Mammary epithelial cell (primary cell): ENCODE measurements at regions of chr22 and their contacts with region 1.

Region 1: GRCh38 chr22:35627264-35628041 is 10.3 kb upstream of the MB start:
- DNase-seq: peak; percentile 82
- H3K4me3 ChIP-seq: peak overlapping the region; percentile 30 to 52 (median 51)
- H3K27ac ChIP-seq: peak overlapping the region; percentile 75
- H3K4me1 ChIP-seq: peaks cover 26% of the 10 kb centered on the region
- H3K27me3 ChIP-seq: no peaks in the 10 kb centered on the region
- CTCF ChIP-seq: peak; percentile 35 to 80

Region 2: DNA sequence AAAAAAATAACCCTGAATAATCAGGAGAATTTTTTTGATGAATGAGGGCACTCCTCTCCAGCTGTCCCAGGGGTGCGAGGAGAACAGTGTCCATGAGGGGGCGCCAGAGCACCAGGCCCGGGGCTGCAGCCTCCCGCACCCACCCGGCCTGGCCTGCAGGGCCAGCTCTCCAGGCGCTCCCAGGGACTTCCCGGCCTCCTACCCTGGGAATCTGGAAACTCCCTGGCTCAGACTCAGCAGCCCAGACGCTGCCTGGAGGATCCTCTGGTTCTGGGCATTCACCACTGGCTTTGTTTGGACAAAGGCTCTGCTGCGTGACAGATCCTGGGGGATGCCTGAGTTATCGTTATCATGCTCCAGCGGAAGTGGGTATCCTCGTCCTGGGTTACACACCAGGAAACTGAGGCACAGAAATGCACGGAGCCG is 196.5 kb before region 1 on chr22:
- CTCF ChIA-PET with region 1: no interaction called
- dilution Hi-C with region 1: no loop called
- in situ Hi-C with region 1: no loop called
- intact Hi-C with region 1: loop called (anchors 1 kb)
- DNase-seq: peak; percentile 87
- H3K4me3 ChIP-seq: no peak overlapping the region
- H3K27ac ChIP-seq: peak overlapping the region; percentile 44
- H3K4me1 ChIP-seq: peaks cover 16% of the 10 kb centered on the region
- H3K27me3 ChIP-seq: no peaks in the 10 kb centered on the region
- CTCF ChIP-seq: peak; percentile 82 to 98

Region 3: GRCh38 chr22:35582861-35583670 is 44.4 kb before region 1 on chr22:
- CTCF ChIA-PET with region 1: no interaction called
- dilution Hi-C with region 1: no loop called
- in situ Hi-C with region 1: no loop called
- intact Hi-C with region 1: loop called (anchors 1 kb)
- DNase-seq: no peak
- H3K4me3 ChIP-seq: no peak overlapping the region
- H3K27ac ChIP-seq: no peak overlapping the region
- H3K4me1 ChIP-seq: peaks cover under 1% of the 10 kb centered on the region
- H3K27me3 ChIP-seq: no peaks in the 10 kb centered on the region
- CTCF ChIP-seq: peak; percentile 85 to 93

Region 4: DNA sequence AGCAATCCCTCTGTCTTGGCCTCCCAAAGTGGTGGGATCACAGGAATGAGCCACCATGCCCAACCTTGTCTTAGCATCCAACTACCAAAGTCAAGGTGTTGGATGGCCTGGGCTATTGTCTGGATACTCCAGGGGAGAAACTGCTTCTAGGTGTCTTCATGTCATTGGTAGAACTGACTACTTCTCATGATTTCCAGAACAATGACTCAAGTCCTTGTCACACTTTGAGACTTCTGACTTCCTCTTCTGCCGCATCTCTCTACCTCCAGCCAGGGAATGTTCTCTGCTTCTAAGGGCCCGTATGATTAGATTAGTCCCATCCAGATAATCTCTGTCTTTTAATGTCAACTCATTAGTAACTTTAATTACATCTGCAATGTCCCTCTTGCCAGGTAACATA is 51.4 kb after region 1 on chr22:
- CTCF ChIA-PET with region 1: no interaction called
- dilution Hi-C with region 1: no loop called
- in situ Hi-C with region 1: no loop called
- intact Hi-C with region 1: no loop called
- DNase-seq: peak; percentile 17
- H3K4me3 ChIP-seq: no peak overlapping the region
- H3K27ac ChIP-seq: no peak overlapping the region
- H3K4me1 ChIP-seq: peaks cover 6% of the 10 kb centered on the region
- H3K27me3 ChIP-seq: no peaks in the 10 kb centered on the region
- CTCF ChIP-seq: no peak

Region 5: DNA sequence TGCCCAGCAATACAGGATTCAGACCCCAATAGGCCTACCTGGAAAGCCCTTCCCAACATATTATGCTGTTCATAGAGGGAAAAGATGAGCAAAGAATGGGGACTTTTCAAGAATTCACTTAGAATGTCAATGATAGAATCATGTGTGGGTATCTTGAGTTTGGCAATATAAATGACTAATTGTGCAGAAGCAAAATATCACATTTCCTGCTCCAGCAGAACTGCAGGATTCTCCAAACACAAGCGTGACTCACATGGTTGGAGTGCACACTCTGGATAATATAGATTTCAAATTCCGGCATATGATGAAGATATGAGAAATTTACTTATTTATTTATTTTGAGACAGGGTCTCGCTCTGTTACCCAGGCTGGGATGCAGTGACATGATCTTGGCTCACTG is 77.7 kb after region 1 on chr22:
- CTCF ChIA-PET with region 1: interaction called, 16 read pairs
- dilution Hi-C with region 1: no loop called
- in situ Hi-C with region 1: no loop called
- intact Hi-C with region 1: no loop called
- DNase-seq: peak; percentile 48
- H3K4me3 ChIP-seq: no peak overlapping the region
- H3K27ac ChIP-seq: no peak overlapping the region
- H3K4me1 ChIP-seq: no peaks in the 10 kb centered on the region
- H3K27me3 ChIP-seq: no peaks in the 10 kb centered on the region
- CTCF ChIP-seq: no peak

Region 6: DNA sequence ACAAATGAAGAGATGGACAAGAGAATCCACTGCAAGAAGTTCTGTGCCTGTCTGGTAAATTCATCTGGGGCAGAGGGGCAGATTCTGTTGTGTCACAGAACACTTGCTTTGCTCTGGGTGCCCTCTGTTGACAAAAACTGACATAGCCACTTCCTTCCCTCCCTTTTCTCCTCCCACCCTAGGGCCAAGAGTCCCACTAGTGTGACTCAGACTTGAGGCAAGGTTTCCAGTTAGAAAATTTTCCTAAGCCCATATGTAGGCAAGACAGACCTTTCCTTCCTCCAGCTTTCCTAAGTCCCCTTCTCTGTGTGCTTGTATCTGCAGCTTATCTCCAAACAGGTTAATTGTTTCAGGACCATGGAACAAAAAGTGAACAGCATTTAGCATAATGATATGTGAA is 294.3 kb after region 1 on chr22:
- CTCF ChIA-PET with region 1: no interaction called
- dilution Hi-C with region 1: no loop called
- in situ Hi-C with region 1: loop called in 1 of 2 experiments (anchors 25 kb)
- intact Hi-C with region 1: loop called (anchors 1 kb)
- DNase-seq: peak; percentile 87
- H3K4me3 ChIP-seq: no peak overlapping the region
- H3K27ac ChIP-seq: peak overlapping the region; percentile 27
- H3K4me1 ChIP-seq: peaks cover 32% of the 10 kb centered on the region
- H3K27me3 ChIP-seq: no peaks in the 10 kb centered on the region
- CTCF ChIP-seq: peak; percentile 46 to 74